Astrocyte of the cerebellum (primary cell): ENCODE measurements at regions of chr12 and their contacts with region 1.

Region 1: DNA sequence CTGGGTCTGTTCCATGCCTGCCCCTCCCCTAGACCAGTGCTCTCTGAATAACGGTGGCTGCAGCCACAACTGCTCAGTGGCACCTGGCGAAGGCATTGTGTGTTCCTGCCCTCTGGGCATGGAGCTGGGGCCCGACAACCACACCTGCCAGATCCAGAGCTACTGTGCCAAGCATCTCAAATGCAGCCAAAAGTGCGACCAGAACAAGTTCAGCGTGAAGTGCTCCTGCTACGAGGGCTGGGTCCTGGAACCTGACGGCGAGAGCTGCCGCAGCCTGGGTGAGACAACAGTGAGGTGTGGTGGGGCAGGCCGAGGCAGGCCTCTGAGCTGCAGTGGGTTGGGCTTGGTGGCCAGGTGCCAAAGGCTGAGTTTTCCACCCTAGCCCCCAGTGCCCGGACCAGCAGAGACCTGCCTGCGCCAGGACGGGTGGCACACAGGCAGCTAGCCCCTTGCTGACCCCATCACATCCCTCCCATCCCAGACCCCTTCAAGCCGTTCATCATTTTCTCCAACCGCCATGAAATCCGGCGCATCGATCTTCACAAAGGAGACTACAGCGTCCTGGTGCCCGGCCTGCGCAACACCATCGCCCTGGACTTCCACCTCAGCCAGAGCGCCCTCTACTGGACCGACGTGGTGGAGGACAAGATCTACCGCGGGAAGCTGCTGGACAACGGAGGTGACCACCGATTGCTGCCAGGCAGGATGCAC is 28.2 kb upstream of the LRP1-AS start:
- DNase-seq: peak; percentile 69
- H3K4me3 ChIP-seq: no peak overlapping the region
- CTCF ChIP-seq: peak; percentile 81

Region 2: GRCh38 chr12:57078519-57079404 is 96.8 kb before region 1 on chr12 and contains the start of gene NEMP1:
- in situ Hi-C with region 1: loop called (anchors 10 kb)
- DNase-seq: peak; percentile 100
- H3K4me3 ChIP-seq: peak within 1 kb of the TSS; percentile 81
- CTCF ChIP-seq: no peak

Region 3: DNA sequence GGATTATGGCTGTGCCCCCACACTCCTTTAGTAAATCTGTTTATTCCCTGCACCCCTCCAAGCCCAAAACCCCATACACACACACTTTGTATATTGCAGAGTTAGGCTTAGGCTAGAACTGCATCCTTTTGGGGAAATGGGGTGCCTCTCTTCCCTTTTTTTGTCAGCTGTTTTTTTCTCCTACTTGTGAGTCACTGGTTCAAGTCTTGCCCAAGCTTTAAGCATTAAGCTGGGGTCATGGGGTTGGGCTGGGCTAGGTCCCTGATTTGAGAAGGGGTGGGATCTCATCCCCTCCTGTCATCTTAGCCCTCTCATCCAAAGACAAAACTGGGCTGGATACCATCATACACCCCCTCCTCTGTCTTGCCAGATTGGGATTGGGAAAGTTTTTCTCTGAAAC is 45.7 kb before region 1 on chr12:
- in situ Hi-C with region 1: loop called (anchors 5 kb)
- DNase-seq: no peak
- H3K4me3 ChIP-seq: peak overlapping the region; percentile 90
- CTCF ChIP-seq: no peak

Region 4: GRCh38 chr12:57280211-57281062 is 104.9 kb after region 1 on chr12:
- in situ Hi-C with region 1: no loop called
- DNase-seq: peak; percentile 64
- H3K4me3 ChIP-seq: no peak overlapping the region
- CTCF ChIP-seq: no peak